ENCODE measurements at regions of chr18 and their contacts with region 1.

Region 1: GRCh38 chr18:34380326-34380725 is 155.6 kb upstream of the NOL4 start:
- DNase-seq: no peak
- H3K4me3 ChIP-seq: no peak overlapping the region
- H3K27ac ChIP-seq: no peak overlapping the region
- H3K4me1 ChIP-seq: no peaks in the 10 kb centered on the region
- H3K27me3 ChIP-seq: no peaks in the 10 kb centered on the region
- CTCF ChIP-seq: no peak
- EP300 ChIP-seq: no peak
- POLR2A ChIP-seq: no peak

Region 2: DNA sequence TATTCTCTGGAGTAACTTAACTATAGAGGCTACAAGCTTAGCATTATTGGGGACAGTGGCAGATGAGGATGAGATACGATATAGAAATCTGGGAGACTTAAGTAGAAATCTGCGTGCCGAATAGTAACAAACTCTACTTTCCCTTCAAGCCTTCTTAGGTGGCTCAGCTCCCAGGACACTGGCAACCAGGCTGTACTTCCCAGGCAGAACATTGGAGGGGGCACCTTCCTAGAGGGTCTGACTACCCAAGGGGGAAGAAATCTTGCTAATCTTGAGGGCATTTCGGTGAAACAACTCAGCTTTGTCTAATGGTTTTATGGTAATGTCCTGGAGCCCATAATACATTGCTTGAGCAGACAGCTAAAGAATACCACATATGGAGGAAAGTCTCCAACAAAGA is 203.6 kb after region 1 on chr18:
- intact Hi-C with region 1: loop called in 1 of 4 experiments (anchors 5 kb)
- DNase-seq: no peak
- H3K4me3 ChIP-seq: no peak overlapping the region
- H3K27ac ChIP-seq: no peak overlapping the region
- H3K4me1 ChIP-seq: no peaks in the 10 kb centered on the region
- H3K27me3 ChIP-seq: no peaks in the 10 kb centered on the region
- CTCF ChIP-seq: no peak
- EP300 ChIP-seq: no peak
- POLR2A ChIP-seq: no peak

Region 3: GRCh38 chr18:34676816-34677574 is 296.7 kb after region 1 on chr18:
- intact Hi-C with region 1: no loop called
- DNase-seq: no peak
- H3K4me3 ChIP-seq: no peak overlapping the region
- H3K27ac ChIP-seq: no peak overlapping the region
- H3K4me1 ChIP-seq: no peaks in the 10 kb centered on the region
- H3K27me3 ChIP-seq: no peaks in the 10 kb centered on the region
- CTCF ChIP-seq: no peak
- EP300 ChIP-seq: no peak
- POLR2A ChIP-seq: no peak

Measured in ovary (tissue), 10 donors.